ENCODE measurements at regions of chr14 and their contacts with region 1.

Region 1: DNA sequence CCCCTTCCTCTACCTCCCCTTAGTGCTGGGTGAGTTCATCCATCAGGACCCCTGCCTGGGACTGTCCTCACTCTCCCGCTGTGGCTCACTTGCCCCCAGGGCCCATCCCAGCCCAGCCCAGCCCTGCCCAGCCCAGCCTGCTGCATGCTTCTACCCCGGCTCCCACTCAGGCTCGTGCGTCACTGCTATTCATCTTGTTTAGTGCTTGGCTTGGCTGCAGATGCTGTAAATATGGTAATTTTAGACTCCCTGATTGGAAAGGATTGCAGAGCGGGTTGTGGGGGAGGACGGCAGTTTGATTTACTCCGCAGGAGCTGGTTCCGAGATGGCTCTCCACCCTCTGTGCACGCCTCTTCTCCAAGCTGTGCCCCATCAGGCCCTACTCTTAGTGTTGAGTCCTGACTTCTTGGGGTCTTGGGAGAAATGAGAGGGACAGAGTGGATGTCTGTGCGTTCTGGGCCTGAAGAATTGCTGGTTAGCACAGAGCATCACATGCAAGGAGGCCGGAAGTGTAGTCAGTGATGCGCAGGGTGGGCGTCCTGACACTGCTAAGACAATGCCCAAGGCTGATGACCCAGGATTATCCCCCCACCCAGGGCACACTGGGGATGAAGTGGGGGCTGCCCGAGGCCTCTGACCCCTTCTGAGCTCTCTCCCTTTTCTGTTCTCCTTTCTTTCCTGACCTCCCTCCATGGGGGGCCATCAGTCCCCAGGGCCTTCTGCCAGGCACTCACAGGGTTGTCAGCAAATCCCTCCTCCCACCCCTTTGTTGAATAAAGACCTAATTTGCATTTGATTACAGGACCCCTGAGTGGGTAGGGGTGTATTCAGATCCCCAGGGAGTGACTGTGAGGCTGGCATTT is 244.4 kb downstream of the ZFP36L1 start:
- DNase-seq: peak; percentile 90 to 93
- ATAC-seq: peak; percentile 74 to 88 (median 78)
- H3K4me3 ChIP-seq: no peak overlapping the region
- H3K27ac ChIP-seq: peak overlapping the region; percentile 96
- H3K4me1 ChIP-seq: peaks cover 81% of the 10 kb centered on the region
- H3K27me3 ChIP-seq: no peaks in the 10 kb centered on the region
- CTCF ChIP-seq: no peak

Region 2: DNA sequence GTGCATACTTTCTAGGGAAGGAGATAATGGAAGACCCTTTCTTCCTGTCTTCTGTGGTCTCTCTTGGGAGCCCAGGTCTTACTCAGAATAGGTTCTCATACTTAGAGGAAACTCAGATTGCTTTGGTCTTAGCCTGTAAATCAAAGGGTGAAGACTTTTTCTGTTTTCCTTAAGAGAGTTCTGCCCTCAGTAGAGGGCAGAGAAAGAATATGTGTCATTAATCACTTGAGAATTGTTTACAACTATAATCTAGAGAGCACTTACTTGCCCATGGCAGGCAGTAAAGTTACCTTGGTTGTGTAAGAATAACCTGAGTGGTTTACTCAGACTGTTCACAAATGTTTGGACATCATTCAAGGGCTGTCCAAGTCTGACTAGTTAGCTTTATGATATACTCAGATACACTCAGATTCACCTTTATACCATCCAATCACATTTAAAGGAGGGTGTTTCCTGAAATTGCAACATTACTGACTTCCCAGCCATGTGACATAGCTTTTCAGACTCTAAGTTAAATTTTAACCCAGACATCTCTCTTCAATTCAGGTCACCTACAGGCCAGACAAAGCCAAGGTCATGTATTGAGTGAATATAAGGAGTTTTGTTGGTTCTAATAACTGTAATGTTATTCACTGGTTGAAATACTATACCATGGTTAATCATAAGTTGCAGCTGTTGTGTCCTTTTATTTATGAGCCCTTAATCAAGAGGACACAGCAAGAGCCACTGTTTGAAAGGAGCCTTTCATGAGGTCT is 356.7 kb before region 1 on chr14:
- intact Hi-C with region 1: loop called in 1 of 2 experiments (anchors 5 kb)
- DNase-seq: no peak
- ATAC-seq: peak; percentile 85 to 94 (median 94)
- H3K4me3 ChIP-seq: no peak overlapping the region
- H3K27ac ChIP-seq: peak overlapping the region; percentile 84
- H3K4me1 ChIP-seq: peaks cover 44% of the 10 kb centered on the region
- H3K27me3 ChIP-seq: no peaks in the 10 kb centered on the region
- CTCF ChIP-seq: no peak

Region 3: GRCh38 chr14:68408680-68409079 is 139.7 kb before region 1 on chr14:
- intact Hi-C with region 1: no loop called
- DNase-seq: no peak
- ATAC-seq: no peak
- H3K4me3 ChIP-seq: no peak overlapping the region
- H3K27ac ChIP-seq: no peak overlapping the region
- H3K4me1 ChIP-seq: peaks cover 3% of the 10 kb centered on the region
- H3K27me3 ChIP-seq: no peaks in the 10 kb centered on the region
- CTCF ChIP-seq: no peak

Region 4: DNA sequence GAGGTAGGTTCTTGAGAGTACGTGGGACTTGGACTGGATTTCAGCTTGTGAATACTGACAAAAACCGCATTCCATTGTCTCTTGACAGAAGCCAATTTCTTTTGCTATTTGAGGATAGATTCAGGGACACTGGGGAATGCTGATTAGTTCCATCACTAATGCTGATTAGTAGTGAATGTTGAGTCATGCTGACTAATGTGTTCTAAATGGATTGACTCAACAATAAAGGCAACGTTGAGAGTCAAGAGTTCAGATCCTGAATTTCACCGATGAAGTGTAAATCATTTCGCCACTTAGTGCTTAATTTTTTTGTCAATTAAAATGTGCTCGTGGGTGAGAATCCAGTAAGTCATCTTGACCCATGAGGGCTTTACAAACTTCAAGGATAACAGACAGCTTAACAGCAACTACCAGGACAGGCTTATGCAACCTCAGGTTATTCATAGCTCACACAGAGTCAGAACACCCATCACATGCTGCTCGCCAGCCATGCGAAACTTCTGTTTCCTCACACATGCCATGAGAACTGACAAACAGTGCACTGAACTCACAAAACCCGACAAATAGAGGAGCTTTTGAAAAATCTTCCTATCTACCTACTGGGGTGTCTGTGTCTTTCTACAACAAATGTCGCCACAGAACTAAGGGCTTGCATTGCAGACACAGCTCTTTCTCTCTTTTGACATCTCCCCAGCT is 72.1 kb before region 1 on chr14:
- intact Hi-C with region 1: loop called (anchors 5 kb)
- DNase-seq: peak; percentile 61 to 84
- ATAC-seq: peak; percentile 94 to 96 (median 95)
- H3K4me3 ChIP-seq: no peak overlapping the region
- H3K27ac ChIP-seq: peak overlapping the region; percentile 90
- H3K4me1 ChIP-seq: peaks cover 27% of the 10 kb centered on the region
- H3K27me3 ChIP-seq: no peaks in the 10 kb centered on the region
- CTCF ChIP-seq: no peak

Region 5: DNA sequence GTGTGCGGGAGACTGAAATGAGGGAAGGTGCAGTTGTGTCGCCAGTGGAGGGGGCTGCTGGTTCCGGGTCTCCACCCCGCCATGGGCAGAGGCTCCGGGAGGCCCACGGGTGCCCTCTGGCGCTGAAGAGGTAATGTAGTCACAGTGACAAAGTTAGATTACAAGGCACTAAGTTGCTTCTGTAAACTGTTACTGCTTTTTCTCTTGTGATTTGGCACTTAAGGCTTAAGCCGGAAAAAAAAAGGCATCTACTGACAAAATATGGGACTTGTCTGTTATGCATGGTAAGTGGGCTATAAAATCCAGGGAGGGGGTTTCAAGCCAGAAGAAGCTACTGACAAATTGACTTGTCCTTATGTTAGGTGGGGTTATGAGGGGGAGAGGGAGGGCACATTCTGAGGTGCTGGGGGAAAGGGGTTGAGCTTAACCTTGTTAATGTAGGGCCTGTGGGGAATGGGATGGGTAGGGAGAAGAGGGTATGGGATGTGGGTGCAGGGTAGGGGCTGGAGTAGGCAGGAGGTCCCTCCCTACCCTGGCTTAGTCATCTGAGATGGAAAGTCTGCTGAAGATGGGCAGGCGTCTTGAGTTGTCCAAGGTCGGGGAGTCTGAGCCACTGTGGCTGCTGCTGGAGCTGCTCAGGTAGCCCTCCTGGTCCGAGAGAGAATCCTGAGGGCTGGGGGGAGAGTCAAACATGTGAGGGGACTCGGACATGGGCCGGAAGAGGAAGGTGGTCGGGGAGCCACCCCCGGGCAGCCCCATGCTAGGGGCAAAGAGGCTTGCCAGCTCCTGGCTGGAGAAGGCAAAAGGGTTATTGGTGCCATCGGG is 240.8 kb after region 1 on chr14:
- intact Hi-C with region 1: loop called (anchors 2 to 5 kb)
- DNase-seq: peak; percentile 88 to 92
- ATAC-seq: peak; percentile 22 to 32 (median 28)
- H3K4me3 ChIP-seq: peak overlapping the region; percentile 91
- H3K27ac ChIP-seq: peak overlapping the region; percentile 100
- H3K4me1 ChIP-seq: peaks cover 9% of the 10 kb centered on the region
- H3K27me3 ChIP-seq: no peaks in the 10 kb centered on the region
- CTCF ChIP-seq: peak; percentile 67

Region 6: DNA sequence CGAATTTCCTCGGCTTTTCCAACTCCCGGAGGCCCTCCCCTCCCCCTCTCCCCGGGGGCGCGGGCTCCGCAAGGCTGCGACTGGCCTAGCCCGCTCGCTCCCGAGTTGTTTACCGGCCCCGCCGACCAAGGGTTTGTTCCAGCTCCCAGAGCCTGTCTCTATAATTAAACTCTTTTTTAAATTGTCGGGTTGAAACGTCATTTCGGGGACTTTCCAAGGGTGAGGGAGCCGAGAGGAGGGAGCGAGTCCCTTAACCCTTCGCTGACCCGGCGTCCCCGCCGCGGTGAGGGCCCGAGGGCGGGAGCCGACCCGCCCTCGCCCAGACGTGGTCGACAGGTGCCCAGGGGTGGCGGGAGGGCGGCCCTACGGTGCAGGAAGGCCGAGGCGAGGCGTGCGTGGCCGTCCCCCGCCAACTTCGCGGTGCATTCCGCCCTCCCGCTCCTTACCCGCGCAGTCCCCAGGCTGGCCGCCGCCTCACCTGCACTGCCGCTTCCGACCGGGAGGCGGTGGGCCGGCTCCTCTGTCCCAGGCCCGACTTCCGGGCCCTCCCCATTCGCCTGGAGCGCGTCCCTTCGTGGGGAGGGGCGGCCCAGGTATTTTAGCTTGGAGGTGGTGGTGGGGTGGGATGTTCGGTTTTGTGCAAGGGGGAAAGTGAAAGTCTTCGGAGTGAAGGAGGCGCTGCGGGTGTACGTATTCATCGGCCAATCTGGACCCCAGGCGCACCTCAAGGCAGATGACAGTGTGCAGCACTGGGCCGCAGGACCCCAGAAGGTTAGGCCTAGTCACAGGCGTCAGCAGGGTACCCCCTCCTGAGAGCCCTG is 247.4 kb after region 1 on chr14:
- intact Hi-C with region 1: loop called (anchors 2 to 5 kb)
- DNase-seq: peak; percentile 85 to 93
- ATAC-seq: peak; percentile 59 to 64 (median 62)
- H3K4me3 ChIP-seq: peak overlapping the region; percentile 91
- H3K27ac ChIP-seq: peak overlapping the region; percentile 100
- H3K4me1 ChIP-seq: no peaks in the 10 kb centered on the region
- H3K27me3 ChIP-seq: no peaks in the 10 kb centered on the region
- CTCF ChIP-seq: peak; percentile 80